ENCODE measurements at regions of chr18 and their contacts with region 1.

Region 1: DNA sequence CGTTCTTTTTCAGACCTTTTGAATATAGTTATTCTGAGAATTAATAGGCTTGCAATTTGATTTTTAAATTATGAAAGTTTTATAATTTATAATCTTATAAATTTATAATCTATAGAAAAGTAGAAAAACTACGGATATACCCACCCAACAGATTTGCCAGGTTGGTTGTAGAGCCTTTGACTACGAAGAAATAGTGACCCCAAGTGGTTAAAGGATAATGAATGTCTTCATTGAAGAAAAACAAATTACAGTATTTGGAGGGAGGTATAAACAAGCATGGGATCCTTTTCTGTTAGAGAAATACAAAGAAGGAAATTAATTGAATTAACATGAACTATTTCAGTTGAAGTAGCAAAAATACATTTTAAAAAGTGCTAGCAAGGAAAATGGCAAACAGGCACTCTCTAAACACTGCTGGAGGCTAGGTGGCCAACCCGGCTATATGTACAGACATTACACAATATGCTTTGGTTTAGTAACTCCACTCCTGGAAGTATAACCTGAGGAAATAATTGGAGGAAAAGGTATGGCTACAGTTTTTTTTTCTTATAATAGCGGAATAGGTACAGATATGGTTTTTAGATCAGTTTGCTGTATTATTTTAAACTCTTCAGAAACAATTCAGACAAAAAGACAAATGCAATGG is 110.9 kb downstream of the MIB1 start:
- DNase-seq: no peak
- ATAC-seq: peak; percentile 68

Region 2: DNA sequence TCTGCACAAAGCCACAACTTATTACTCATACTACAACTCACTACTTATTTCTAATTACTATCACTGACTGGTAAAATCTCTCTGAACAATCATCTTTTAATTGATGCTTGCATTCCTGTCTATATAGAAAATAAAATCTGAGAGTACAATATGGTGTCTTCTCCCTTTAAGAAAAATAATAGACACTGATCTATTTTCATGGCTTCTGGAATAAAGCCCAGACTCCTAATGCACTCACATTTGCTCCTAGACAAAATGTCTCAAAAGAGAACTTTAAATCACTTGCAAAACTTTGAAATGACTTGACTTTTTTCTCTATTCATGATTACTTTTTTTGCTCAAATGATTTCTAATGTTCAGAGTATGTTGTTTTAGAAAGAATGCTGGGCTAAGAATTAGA is 279.7 kb before region 1 on chr18:
- intact Hi-C with region 1: no loop called
- DNase-seq: no peak
- ATAC-seq: no peak

Region 3: DNA sequence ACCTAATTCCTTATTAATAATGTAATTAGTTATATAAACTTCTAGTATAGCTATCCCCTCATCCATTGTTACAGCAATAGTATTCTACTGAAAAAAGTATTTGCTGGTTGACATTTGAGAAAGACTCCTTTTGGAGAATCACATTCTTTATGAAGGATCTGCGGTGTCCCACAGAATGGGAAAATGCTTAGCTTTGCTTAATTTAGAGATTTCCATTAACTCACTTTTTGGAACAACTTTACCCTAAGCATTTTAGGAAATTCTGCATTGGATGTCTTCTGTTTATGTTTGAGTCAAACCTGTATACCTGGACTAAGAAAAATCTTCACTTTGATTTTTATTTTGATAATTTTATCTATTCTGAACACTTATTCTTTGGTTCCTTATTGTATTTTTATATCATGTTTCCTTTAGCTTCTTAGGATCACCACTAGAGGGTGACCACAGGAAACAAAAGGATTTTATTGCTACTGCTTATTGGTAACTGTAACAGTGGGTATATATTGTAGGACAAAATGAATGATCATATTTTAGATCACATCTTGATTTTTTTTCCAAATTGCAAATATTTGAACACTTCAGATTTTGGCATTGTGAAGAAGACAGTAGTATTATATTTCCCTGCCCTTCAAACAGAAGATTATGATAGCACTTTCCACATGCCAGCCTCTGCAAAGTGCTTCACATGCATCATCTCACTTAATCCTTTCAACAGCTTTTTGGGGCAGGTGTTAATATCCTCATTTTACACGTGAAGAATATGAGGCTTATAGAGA is 31.2 kb before region 1 on chr18:
- intact Hi-C with region 1: loop called (anchors 2 kb)
- DNase-seq: no peak
- ATAC-seq: peak; percentile 38

Region 4: GRCh38 chr18:21949326-21950015 is 98.0 kb after region 1 on chr18:
- intact Hi-C with region 1: no loop called
- DNase-seq: no peak
- ATAC-seq: no peak

Measured in Right ventricle myocardium superior (tissue), 1 donor.